Activated naive CD8-positive, alpha-beta T cell treated with anti-CD3 and anti-CD28 coated beads, Interleukin-2, amount 10 ng/mL, durations not matched to agents 7 days and 5 days (primary cell): ENCODE measurements at regions of chr17 and their contacts with region 1.

Region 1: GRCh38 chr17:49694847-49695683 is 12.7 kb downstream of the SLC35B1 start:
- DNase-seq: peak; percentile 81
- ATAC-seq: peak; percentile 16
- H3K4me3 Mint-ChIP-seq: peak overlapping the region; percentile 63
- H3K27ac Mint-ChIP-seq: peak overlapping the region; percentile 92
- H3K4me1 Mint-ChIP-seq: peaks cover 37% of the 10 kb centered on the region
- H3K27me3 Mint-ChIP-seq: no peaks in the 10 kb centered on the region

Region 2: GRCh38 chr17:49575579-49576087 is 119.4 kb before region 1 on chr17 and contains the start of gene NXPH3:
- POLR2A ChIA-PET with region 1: interaction called, 33 read pairs
- DNase-seq: peak; percentile 94
- ATAC-seq: peak; percentile 92
- H3K4me3 Mint-ChIP-seq: peak within 1 kb of the TSS; percentile 82
- H3K27ac Mint-ChIP-seq: no peak within 1 kb of the TSS
- H3K4me1 Mint-ChIP-seq: peaks cover 13% of the 10 kb centered on the region
- H3K27me3 Mint-ChIP-seq: peaks cover 61% of the 10 kb centered on the region
- total RNA-seq, gene NXPH3: 0.14 TPM in 1 of 2 experiments, not detected in the other